HepG2 (cell line): ENCODE measurements at regions of chr11 and their contacts with region 1.

Region 1: DNA sequence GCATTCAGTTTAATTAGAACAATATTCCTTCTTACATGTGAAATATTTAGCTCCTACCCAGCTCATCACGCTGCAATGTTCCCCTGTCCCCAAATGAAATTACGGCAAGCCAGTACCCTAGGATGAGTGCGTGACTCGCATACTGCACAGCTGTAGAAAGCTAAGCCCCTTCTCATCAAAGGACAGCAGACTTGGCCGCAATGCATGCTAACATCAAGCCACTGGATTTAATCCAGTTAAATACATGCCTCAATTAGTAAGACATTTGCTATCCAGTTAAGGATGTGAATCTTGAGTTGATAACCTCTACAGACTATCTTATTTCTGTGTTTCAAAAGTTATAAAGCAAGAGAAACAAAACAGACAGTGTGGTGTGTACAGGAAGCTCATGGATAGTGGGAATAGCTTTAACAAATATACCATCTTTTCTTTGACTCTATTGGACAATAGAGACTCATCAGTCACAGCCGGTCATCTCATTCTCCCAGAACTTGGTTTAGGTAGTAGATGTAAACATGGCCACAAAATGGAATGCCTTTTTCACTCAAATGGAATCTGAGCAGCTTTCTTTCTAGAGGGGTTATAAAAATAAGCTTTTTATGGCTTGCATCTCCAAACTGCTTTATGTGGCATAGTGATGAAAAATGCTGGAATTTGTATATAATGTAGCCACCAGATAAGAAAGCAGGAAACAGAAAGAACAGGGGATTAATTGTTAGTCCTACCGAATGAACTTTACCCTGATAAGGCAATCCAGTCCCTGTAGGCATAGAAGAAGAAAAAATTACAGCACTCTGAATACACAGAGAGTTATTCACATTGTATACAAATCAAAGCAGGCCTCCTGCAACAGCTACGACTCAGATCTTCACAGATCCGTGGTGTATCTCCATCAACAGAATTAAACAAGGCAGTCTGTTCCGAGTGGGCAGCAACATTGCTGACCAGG is 224.1 kb downstream of the CADM1 start:
- DNase-seq: peak; percentile 87
- ATAC-seq: peak; percentile 98
- H3K4me3 ChIP-seq: peak overlapping the region; percentile 2 to 21 (median 3); a peak in 2 of 6 replicates
- H3K27ac ChIP-seq: peak overlapping the region; percentile 56
- H3K4me1 ChIP-seq: peaks cover 30% of the 10 kb centered on the region
- H3K27me3 ChIP-seq: no peaks in the 10 kb centered on the region
- CTCF ChIP-seq: no peak
- EP300 ChIP-seq: peak in 1 of 2 experiments; percentile 39; a peak in 1 of 4 replicates
- POLR2A ChIP-seq: no peak
- RAD21 ChIP-seq: no peak

Region 2: DNA sequence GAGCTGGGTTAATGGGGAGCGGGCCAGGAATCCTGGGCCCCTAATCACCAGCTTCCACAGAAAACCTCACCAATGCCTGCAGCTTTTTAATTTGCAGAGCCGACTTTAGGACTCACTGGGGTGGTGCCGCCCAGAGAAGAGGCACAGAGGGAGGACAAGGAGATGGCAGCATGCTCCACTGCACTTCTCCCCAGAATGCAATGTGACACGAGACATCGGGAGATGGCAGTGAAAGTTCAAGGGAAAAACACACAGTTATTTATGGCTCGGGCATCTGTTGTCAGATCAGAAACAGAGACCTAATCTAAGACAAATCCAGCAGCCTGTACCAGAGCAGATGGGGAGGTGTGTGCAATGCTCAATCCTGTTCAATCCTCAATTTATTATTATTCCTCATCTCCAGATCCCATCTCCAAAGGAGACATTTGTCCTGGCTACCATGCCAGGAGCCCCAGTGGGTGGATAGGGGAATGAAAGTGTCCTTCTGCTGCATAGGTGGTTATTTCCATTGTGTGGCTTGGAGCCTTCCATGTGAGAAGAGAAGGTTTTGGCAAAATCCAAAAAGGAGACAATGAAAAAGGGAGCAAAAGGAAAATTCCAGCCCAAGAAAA is 351.7 kb before region 1 on chr11:
- CTCF ChIA-PET with region 1: no interaction called
- POLR2A ChIA-PET with region 1: no interaction called
- in situ Hi-C with region 1: no loop called
- intact Hi-C with region 1: no loop called
- DNase-seq: no peak
- ATAC-seq: no peak
- H3K4me3 ChIP-seq: no peak overlapping the region
- H3K27ac ChIP-seq: no peak overlapping the region
- H3K4me1 ChIP-seq: no peaks in the 10 kb centered on the region
- H3K27me3 ChIP-seq: peaks cover 0 to 4% of the 10 kb centered on the region in 2 experiments; a peak in 1 of 5 replicates
- CTCF ChIP-seq: no peak
- EP300 ChIP-seq: no peak
- POLR2A ChIP-seq: no peak
- RAD21 ChIP-seq: no peak

Region 3: GRCh38 chr11:115193914-115194801 is 85.9 kb before region 1 on chr11:
- CTCF ChIA-PET with region 1: no interaction called
- POLR2A ChIA-PET with region 1: no interaction called
- in situ Hi-C with region 1: no loop called
- intact Hi-C with region 1: no loop called
- DNase-seq: peak; percentile 21
- ATAC-seq: no peak
- H3K4me3 ChIP-seq: no peak overlapping the region
- H3K27ac ChIP-seq: no peak overlapping the region
- H3K4me1 ChIP-seq: peaks cover 9% of the 10 kb centered on the region
- H3K27me3 ChIP-seq: no peaks in the 10 kb centered on the region
- CTCF ChIP-seq: no peak
- EP300 ChIP-seq: no peak
- POLR2A ChIP-seq: no peak
- RAD21 ChIP-seq: no peak

Region 4: GRCh38 chr11:115249116-115249515 is 31.0 kb before region 1 on chr11:
- CTCF ChIA-PET with region 1: no interaction called
- POLR2A ChIA-PET with region 1: no interaction called
- in situ Hi-C with region 1: no loop called
- intact Hi-C with region 1: loop called (anchors 2 kb)
- DNase-seq: peak; percentile 58
- ATAC-seq: peak; percentile 66
- H3K4me3 ChIP-seq: no peak overlapping the region
- H3K27ac ChIP-seq: no peak overlapping the region
- H3K4me1 ChIP-seq: peaks cover 41% of the 10 kb centered on the region
- H3K27me3 ChIP-seq: no peaks in the 10 kb centered on the region
- CTCF ChIP-seq: no peak
- EP300 ChIP-seq: peak in 1 of 2 experiments; percentile 25; a peak in 1 of 4 replicates
- POLR2A ChIP-seq: no peak
- RAD21 ChIP-seq: no peak